Dorsolateral prefrontal cortex (tissue), 120 donors: ENCODE measurements at regions of chr1 and their contacts with region 1.

Region 1: GRCh38 chr1:45490626-45491486 is at the start of gene TESK2:
- DNase-seq: peak; percentile 96 to 99 (median 98)
- H3K4me3 ChIP-seq: peak within 1 kb of the TSS; percentile 68 to 100 (median 94)
- H3K27ac ChIP-seq: peak within 1 kb of the TSS; percentile 18 to 96 (median 89)
- H3K27me3 ChIP-seq: no peaks in the 10 kb centered on the region
- CTCF ChIP-seq: peak in 36 of 56 donors; percentile 2 to 56 (median 34)
- total RNA-seq, gene TESK2: 4.1 to 32.6 (median 11.2) TPM

Region 2: GRCh38 chr1:45205910-45206721 is 284.7 kb before region 1 on chr1 and contains the start of gene ZSWIM5:
- intact Hi-C with region 1: loop called in 1 of 2 experiments (anchors 10 kb)
- DNase-seq: peak; percentile 48 to 87 (median 71)
- H3K4me3 ChIP-seq: peak within 1 kb of the TSS; percentile 66 to 96 (median 89)
- H3K27ac ChIP-seq: peak within 1 kb of the TSS; percentile 79 to 98 (median 95)
- H3K27me3 ChIP-seq: no peaks in the 10 kb centered on the region
- CTCF ChIP-seq: peak in 5 of 56 donors; percentile 9 to 29 (median 13)
- total RNA-seq, gene ZSWIM5: 5.6 to 11.4 (median 8.0) TPM

Region 3: GRCh38 chr1:45339789-45340570 is 150.9 kb before region 1 on chr1 and contains the starts of genes MUTYH and TOE1:
- intact Hi-C with region 1: loop called (anchors 5 kb)
- DNase-seq: peak; percentile 80 to 92 (median 89)
- H3K4me3 ChIP-seq: peak within 1 kb of the TSS; percentile 65 to 98 (median 89)
- H3K27ac ChIP-seq: peak within 1 kb of the TSS; percentile 84 to 100 (median 97)
- H3K27me3 ChIP-seq: no peaks in the 10 kb centered on the region
- CTCF ChIP-seq: peak in 42 of 56 donors; percentile 5 to 65 (median 26)
- total RNA-seq, gene MUTYH: 18.4 to 56.7 (median 33.5) TPM
- total RNA-seq, gene TOE1: 3.3 to 10.9 (median 7.1) TPM

Region 4: DNA sequence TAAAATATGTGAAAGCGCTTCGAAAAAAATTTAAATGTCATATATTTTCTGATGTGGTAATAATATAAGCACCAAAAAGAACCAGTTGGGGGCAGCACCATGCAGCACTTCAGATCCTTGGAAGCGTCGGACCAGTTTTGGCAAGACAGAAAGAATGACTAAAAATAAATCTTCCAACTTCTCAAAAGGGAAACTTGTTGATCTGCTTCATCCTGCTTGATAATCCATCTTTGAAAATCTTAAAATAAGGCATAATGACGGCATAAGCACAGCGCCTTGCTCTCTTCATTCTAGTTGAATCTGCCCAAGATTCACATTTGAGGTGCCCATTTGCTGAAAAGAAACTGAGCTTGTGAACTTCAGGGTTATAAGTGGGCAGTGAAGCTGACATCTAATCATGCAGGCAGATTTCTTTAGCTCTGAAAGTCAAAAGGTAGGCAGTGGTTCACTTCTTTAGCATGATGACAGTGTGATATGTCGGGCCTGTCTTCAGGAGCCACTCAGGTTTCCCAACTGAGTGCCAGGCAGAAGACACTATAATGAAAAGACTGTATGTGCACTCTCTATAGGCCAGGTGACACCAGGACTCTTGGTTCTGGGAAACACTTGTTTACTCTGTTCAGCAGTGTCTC is 130.9 kb before region 1 on chr1:
- intact Hi-C with region 1: loop called (anchors 1 kb)
- DNase-seq: peak in 9 of 10 donors; percentile 47 to 84 (median 60)
- H3K4me3 ChIP-seq: peak overlapping the region in 25 of 59 donors; percentile 1 to 48 (median 13)
- H3K27ac ChIP-seq: peak overlapping the region in 58 of 59 donors; percentile 12 to 90 (median 78)
- H3K27me3 ChIP-seq: no peaks in the 10 kb centered on the region
- CTCF ChIP-seq: peak; percentile 61 to 92 (median 86)

Region 5: GRCh38 chr1:45410850-45411314 is 80.0 kb before region 1 on chr1:
- intact Hi-C with region 1: loop called in 1 of 2 experiments (anchors 5 kb)
- DNase-seq: no peak
- H3K4me3 ChIP-seq: no peak overlapping the region
- H3K27ac ChIP-seq: no peak overlapping the region
- H3K27me3 ChIP-seq: no peaks in the 10 kb centered on the region
- CTCF ChIP-seq: no peak

Region 6: DNA sequence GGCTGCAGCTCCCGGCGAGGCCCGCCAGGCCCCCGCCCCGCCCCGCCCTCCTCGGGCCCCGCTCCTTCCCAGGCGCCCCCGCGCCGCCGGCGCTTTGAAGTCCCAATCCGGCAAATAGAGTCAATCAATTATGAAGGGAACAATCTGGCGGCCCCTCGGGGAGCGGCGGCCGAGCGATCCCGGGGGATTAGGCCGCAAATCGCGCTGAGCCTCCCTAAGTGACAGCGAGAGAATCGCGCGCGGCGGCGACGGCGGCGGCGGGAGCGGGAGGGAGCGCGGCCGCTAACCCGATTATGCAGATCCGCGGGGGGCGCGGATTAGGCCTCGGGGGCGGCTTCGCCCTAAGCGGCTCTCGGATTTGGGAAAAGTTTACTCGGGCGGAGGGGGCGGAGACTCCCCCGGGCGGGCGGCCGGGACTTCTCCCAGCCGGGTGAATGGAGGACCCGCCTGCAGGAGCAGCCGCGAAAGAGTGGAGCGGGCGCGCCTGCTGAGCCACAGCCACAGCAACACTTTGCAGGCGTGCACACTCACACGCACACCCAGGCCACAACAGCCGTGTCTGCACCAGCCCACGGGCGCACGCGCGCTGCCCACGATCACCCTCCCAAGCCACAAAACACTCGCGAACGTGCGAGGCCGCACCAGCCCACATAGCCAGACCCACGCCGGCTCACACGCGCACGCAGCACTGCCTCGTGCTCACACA is 975.8 kb after region 1 on chr1:
- intact Hi-C with region 1: no loop called
- DNase-seq: peak in 8 of 10 donors; percentile 25 to 66 (median 44)
- H3K4me3 ChIP-seq: peak overlapping the region; percentile 48 to 93 (median 73)
- H3K27ac ChIP-seq: peak overlapping the region in 11 of 59 donors; percentile 5 to 63 (median 41)
- H3K27me3 ChIP-seq: peaks cover 0 to 5% (median 0%) of the 10 kb centered on the region in 45 donors
- CTCF ChIP-seq: peak in 1 of 56 donors; percentile 9